ENCODE measurements at regions of chr19 and their contacts with region 1.

Region 1: DNA sequence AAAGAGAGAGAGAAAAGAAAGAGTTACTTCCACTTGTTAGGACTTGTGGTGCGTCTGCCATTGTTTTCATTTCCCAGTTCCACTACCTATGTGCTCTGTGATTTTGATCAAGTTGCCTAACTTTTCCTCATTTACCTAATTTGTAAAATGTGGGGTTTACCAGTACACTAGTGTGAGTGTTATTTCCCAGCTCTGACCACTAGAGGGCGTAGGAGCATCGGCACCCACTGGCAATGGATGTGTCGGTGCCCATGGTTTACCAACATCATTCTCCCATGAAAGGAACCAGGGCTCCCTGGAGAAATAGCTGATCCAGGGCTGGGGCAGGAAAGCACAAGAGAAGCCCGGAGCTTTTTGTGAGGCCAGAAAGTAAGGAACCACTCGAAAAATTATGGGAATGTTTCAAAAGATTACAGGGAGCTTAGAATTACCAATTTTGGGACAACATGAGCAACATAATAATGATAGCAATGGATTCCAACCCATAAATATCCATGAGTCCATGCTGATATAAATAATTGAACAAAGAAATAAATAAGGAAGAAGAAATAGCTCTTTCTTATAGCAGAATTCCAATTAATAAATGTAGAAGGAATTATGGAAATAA is 15.1 kb upstream of the CEACAM4 start:
- DNase-seq: peak; percentile 50 to 56
- H3K4me3 ChIP-seq: no peak overlapping the region
- H3K27ac ChIP-seq: no peak overlapping the region
- H3K4me1 ChIP-seq: no peaks in the 10 kb centered on the region
- H3K27me3 ChIP-seq: peaks cover 32% of the 10 kb centered on the region
- CTCF ChIP-seq: peak; percentile 96

Region 2: DNA sequence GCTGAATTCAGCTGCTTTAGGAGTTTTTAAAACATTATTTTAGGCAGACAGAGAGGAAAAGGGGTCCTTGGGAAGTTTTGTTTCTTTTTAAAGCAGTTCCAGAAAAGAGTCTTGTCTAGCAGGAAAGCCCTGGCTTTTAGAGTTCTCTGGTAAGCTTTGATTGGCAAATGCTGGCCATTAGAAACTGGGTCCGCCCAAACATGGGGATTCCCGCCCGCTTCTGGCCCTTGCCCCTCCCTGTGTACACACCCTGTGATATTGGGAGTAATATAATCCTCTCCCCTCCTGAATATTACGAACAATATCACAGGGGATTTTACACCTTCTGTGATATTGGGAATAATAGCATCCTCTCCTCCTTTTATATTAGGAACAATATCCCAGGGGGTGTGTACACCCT is 140.1 kb before region 1 on chr19:
- CTCF ChIA-PET with region 1: no interaction called
- POLR2A ChIA-PET with region 1: no interaction called
- intact Hi-C with region 1: no loop called
- DNase-seq: no peak
- H3K4me3 ChIP-seq: no peak overlapping the region
- H3K27ac ChIP-seq: no peak overlapping the region
- H3K4me1 ChIP-seq: no peaks in the 10 kb centered on the region
- H3K27me3 ChIP-seq: peaks cover 86% of the 10 kb centered on the region
- CTCF ChIP-seq: no peak

Region 3: GRCh38 chr19:41606215-41606837 is 35.7 kb before region 1 on chr19:
- CTCF ChIA-PET with region 1: no interaction called
- POLR2A ChIA-PET with region 1: no interaction called
- intact Hi-C with region 1: no loop called
- DNase-seq: no peak
- H3K4me3 ChIP-seq: no peak overlapping the region
- H3K27ac ChIP-seq: no peak overlapping the region
- H3K4me1 ChIP-seq: no peaks in the 10 kb centered on the region
- H3K27me3 ChIP-seq: peaks cover 90% of the 10 kb centered on the region
- CTCF ChIP-seq: no peak

Region 4: GRCh38 chr19:41616792-41617621 is 25.0 kb before region 1 on chr19:
- CTCF ChIA-PET with region 1: no interaction called
- POLR2A ChIA-PET with region 1: no interaction called
- intact Hi-C with region 1: no loop called
- DNase-seq: peak in 1 of 2 experiments; percentile 19
- H3K4me3 ChIP-seq: no peak overlapping the region
- H3K27ac ChIP-seq: no peak overlapping the region
- H3K4me1 ChIP-seq: no peaks in the 10 kb centered on the region
- H3K27me3 ChIP-seq: peaks cover 74% of the 10 kb centered on the region
- CTCF ChIP-seq: no peak

Region 5: DNA sequence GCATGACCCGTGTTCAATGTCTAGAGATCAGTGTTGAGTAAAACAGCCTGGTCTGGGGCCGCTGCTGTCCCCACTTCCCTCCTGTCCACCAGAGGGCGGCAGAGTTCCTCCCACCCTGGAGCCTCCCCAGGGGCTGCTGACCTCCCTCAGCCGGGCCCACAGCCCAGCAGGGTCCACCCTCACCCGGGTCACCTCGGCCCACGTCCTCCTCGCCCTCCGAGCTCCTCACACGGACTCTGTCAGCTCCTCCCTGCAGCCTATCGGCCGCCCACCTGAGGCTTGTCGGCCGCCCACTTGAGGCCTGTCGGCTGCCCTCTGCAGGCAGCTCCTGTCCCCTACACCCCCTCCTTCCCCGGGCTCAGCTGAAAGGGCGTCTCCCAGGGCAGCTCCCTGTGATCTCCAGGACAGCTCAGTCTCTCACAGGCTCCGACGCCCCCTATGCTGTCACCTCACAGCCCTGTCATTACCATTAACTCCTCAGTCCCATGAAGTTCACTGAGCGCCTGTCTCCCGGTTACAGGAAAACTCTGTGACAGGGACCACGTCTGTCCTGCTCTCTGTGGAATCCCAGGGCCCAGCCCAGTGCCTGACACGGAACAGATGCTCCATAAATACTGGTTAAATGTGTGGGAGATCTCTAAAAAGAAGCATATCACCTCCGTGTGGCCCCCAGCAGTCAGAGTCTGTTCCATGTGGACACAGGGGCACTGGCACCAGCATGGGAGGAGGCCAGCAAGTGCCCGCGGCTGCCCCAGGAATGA is 64.9 kb after region 1 on chr19:
- CTCF ChIA-PET with region 1: interaction called, 7 read pairs
- POLR2A ChIA-PET with region 1: no interaction called
- intact Hi-C with region 1: loop called (anchors 5 kb)
- DNase-seq: peak; percentile 69 to 81
- H3K4me3 ChIP-seq: peak overlapping the region; percentile 60; the same call in 1 of the 2 replicates
- H3K27ac ChIP-seq: no peak overlapping the region
- H3K4me1 ChIP-seq: peaks cover 18% of the 10 kb centered on the region
- H3K27me3 ChIP-seq: no peaks in the 10 kb centered on the region
- CTCF ChIP-seq: peak; percentile 99

Region 6: DNA sequence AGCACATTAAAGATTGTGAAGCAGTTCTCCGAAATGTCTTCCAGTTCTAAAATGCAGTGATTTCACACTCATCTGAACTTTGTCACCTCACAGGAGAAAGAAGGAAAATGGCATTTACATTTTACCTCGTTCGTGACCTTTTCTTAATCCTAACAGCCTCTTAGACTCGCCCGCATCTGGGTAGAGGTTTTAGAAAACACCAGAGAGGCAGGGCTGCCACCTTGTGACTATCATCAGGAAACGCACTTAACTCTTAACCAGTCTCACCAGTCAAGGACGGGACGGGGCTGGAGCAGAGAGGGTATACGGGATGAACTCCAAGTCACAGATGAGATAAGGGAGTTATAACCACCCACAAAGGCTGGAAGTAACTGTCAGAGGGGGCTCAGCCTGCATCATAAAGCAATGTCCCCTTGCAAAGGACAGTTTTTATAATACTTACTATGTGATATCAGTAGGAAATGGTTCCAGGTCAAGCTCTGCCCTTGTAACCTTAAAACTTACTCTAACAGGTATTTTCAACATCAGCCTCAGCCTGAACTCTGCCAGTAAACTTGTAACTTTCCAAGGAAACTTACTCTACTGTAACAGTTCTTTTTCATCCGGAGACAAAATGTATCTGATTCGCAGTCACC is 104.7 kb after region 1 on chr19:
- CTCF ChIA-PET with region 1: interaction called, 3 read pairs
- POLR2A ChIA-PET with region 1: no interaction called
- intact Hi-C with region 1: loop called (anchors 5 kb)
- DNase-seq: peak; percentile 57 to 75
- H3K4me3 ChIP-seq: no peak overlapping the region
- H3K27ac ChIP-seq: 0 out of 2 replicates have a peak overlapping the region, but pooled peaks have one; percentile 7
- H3K4me1 ChIP-seq: peaks cover 64% of the 10 kb centered on the region
- H3K27me3 ChIP-seq: no peaks in the 10 kb centered on the region
- CTCF ChIP-seq: peak; percentile 83

Region 7: GRCh38 chr19:41775360-41775695 is 133.3 kb after region 1 on chr19:
- CTCF ChIA-PET with region 1: interaction called, 14 read pairs
- POLR2A ChIA-PET with region 1: no interaction called
- intact Hi-C with region 1: no loop called
- DNase-seq: peak; percentile 50 to 99
- H3K4me3 ChIP-seq: peak overlapping the region; percentile 34; the same call in 1 of the 2 replicates
- H3K27ac ChIP-seq: peak overlapping the region; percentile 100
- H3K4me1 ChIP-seq: peaks cover 91% of the 10 kb centered on the region
- H3K27me3 ChIP-seq: no peaks in the 10 kb centered on the region
- CTCF ChIP-seq: no peak

Region 8: GRCh38 chr19:41785653-41786052 is 143.7 kb after region 1 on chr19:
- CTCF ChIA-PET with region 1: no interaction called
- POLR2A ChIA-PET with region 1: no interaction called
- intact Hi-C with region 1: loop called (anchors 5 kb)
- DNase-seq: peak; percentile 77 to 79
- H3K4me3 ChIP-seq: no peak overlapping the region
- H3K27ac ChIP-seq: peak overlapping the region; percentile 51
- H3K4me1 ChIP-seq: peaks cover 56% of the 10 kb centered on the region
- H3K27me3 ChIP-seq: no peaks in the 10 kb centered on the region
- CTCF ChIP-seq: peak; percentile 92

Region 9: GRCh38 chr19:41821003-41821735 is 179.2 kb after region 1 on chr19:
- CTCF ChIA-PET with region 1: interaction called, 4 read pairs
- POLR2A ChIA-PET with region 1: no interaction called
- intact Hi-C with region 1: loop called (anchors 5 kb)
- DNase-seq: peak; percentile 45 to 47
- H3K4me3 ChIP-seq: no peak overlapping the region
- H3K27ac ChIP-seq: no peak overlapping the region
- H3K4me1 ChIP-seq: no peaks in the 10 kb centered on the region
- H3K27me3 ChIP-seq: 0 out of 2 replicates have a peak, but pooled peaks cover 5% of the 10 kb centered on the region
- CTCF ChIP-seq: peak; percentile 87

Region 10: GRCh38 chr19:42038666-42039065 is 396.7 kb after region 1 on chr19:
- CTCF ChIA-PET with region 1: no interaction called
- POLR2A ChIA-PET with region 1: no interaction called
- intact Hi-C with region 1: no loop called
- DNase-seq: no peak
- H3K4me3 ChIP-seq: no peak overlapping the region
- H3K27ac ChIP-seq: no peak overlapping the region
- H3K4me1 ChIP-seq: no peaks in the 10 kb centered on the region
- H3K27me3 ChIP-seq: 0 out of 2 replicates have a peak, but pooled peaks cover 5% of the 10 kb centered on the region
- CTCF ChIP-seq: no peak

Measured in PC-9 (cell line).